ENCODE measurements at regions of chr12 and their contacts with region 1.

Region 1: DNA sequence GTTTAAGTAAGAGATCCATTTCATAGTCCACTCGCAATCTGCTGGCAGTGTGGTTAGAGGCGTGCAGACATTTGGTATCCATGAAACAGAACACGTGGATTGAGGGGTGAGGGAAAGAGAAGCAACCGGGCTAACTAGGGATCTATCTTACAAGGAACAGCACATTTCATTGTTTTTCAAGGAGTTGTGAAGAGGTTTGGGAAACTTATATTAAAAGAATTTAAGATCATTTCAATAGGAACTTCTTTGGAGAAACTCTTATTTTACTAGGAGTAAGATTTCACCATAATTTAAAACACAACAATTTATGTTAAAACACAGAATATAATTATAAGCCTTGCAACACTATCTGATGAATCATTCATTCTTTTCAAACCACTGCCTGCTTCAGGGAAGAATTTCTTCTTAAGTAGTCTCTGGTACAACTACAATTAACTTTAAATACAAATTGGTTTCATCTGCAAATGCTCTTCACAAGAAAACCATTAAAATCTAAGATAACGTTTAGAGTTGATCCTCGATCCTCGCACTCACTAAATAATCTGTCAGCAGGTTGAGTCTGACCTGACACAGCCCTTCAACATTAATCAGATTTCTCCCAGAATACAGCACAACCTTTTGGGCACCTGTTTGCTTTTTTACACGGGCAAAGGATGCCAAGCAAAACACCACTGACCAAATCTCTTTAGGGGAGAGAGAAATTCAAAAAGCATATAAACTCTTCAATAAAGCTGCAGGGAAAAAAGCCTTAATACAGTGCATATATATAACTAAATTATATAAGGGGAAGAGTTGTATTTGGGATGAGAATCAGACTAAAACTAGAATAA is 27.3 kb downstream of the PPTC7 start:
- DNase-seq: peak; percentile 32
- ATAC-seq: no peak
- H3K4me3 ChIP-seq: no peak overlapping the region
- H3K27ac ChIP-seq: no peak overlapping the region
- H3K4me1 ChIP-seq: peaks cover 20% of the 10 kb centered on the region
- H3K27me3 ChIP-seq: no peaks in the 10 kb centered on the region
- CTCF ChIP-seq: no peak

Region 2: GRCh38 chr12:110508071-110508586 is 47.7 kb before region 1 on chr12:
- CTCF ChIA-PET with region 1: no interaction called
- POLR2A ChIA-PET with region 1: no interaction called
- intact Hi-C with region 1: loop called (anchors 1 kb)
- DNase-seq: no peak
- ATAC-seq: no peak
- H3K4me3 ChIP-seq: no peak overlapping the region
- H3K27ac ChIP-seq: no peak overlapping the region
- H3K4me1 ChIP-seq: peaks cover 3% of the 10 kb centered on the region; the same call in 1 of the 2 replicates
- H3K27me3 ChIP-seq: no peaks in the 10 kb centered on the region
- CTCF ChIP-seq: no peak

Region 3: DNA sequence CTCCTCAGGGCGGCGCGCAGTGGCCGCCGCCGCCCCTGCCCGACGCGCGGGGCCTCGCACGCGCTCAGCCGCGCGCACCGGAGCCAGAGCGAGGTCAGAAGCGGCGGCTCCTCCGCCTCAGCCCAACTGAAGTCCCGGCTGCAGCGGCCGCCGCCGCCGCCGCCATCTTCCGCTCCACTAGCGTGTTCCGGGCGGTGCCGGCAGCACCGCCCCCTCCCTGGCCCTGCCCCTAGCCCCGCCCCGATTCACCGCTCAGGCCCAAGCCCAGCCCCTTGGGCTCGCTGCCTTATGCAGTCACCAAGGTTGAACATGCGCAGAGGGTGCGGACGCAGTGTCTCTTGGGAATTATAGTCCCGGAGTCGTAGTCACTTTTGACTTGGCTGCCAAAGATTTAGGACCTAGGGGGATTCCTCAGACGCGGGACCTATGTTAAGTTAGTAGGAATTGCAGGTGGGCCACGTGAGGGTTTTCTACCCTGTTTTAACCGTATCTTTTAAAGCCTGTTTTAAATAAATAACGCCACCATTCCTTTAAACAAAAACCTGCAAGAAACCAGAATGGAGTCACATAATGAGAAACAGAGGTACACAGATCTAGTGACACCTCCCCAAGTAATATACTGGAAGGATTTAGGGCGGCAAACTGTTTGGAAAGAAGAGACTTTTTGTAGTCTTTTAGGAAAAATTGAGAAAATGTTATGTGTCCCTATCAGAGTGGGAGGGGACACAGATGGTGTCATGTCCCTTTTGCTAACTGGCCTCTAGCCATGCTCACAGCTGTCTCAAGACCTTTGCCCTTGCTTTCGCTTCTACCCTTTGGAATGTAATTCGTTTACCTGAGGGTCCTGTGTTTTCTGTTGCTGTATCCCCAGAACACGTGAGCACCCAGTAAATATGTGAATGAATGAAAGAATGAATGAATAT is 27.6 kb after region 1 on chr12 and contains the start of gene PPTC7:
- CTCF ChIA-PET with region 1: no interaction called
- POLR2A ChIA-PET with region 1: no interaction called
- intact Hi-C with region 1: loop called (anchors 1 kb)
- DNase-seq: peak; percentile 99
- ATAC-seq: peak; percentile 86
- H3K4me3 ChIP-seq: peak within 1 kb of the TSS; percentile 85
- H3K27ac ChIP-seq: peak within 1 kb of the TSS; percentile 53
- H3K4me1 ChIP-seq: peaks cover 41% of the 10 kb centered on the region
- H3K27me3 ChIP-seq: no peaks in the 10 kb centered on the region
- CTCF ChIP-seq: no peak
- total RNA-seq, gene PPTC7: 9.0 and 16.0 TPM in 2 replicates